Activated CD4-positive, alpha-beta T cell treated with anti-CD3 and anti-CD28 coated beads, Interleukin-2, amount 10 ng/mL, durations not matched to agents 24 days and 14 days (primary cell): ENCODE measurements at regions of chr20 and their contacts with region 1.

Region 1: GRCh38 chr20:41443691-41444090 is 77.1 kb upstream of the EMILIN3 start:
- DNase-seq: no peak
- H3K4me3 Mint-ChIP-seq: peak overlapping the region; percentile 25
- H3K27ac Mint-ChIP-seq: peak overlapping the region; percentile 69
- H3K4me1 Mint-ChIP-seq: peaks cover 33% of the 10 kb centered on the region
- H3K27me3 Mint-ChIP-seq: no peaks in the 10 kb centered on the region

Region 2: GRCh38 chr20:41003143-41003883 is 440.4 kb before region 1 on chr20:
- intact Hi-C with region 1: loop called (anchors 10 kb)
- DNase-seq: peak; percentile 88
- H3K4me3 Mint-ChIP-seq: peak overlapping the region; percentile 72
- H3K27ac Mint-ChIP-seq: peak overlapping the region; percentile 95
- H3K4me1 Mint-ChIP-seq: peaks cover 44% of the 10 kb centered on the region
- H3K27me3 Mint-ChIP-seq: no peaks in the 10 kb centered on the region

Region 3: GRCh38 chr20:41428285-41428684 is 15.4 kb before region 1 on chr20:
- intact Hi-C with region 1: loop called (anchors 1 kb)
- DNase-seq: peak; percentile 85
- H3K4me3 Mint-ChIP-seq: peak overlapping the region; percentile 64
- H3K27ac Mint-ChIP-seq: peak overlapping the region; percentile 91
- H3K4me1 Mint-ChIP-seq: peaks cover 46% of the 10 kb centered on the region
- H3K27me3 Mint-ChIP-seq: no peaks in the 10 kb centered on the region

Region 4: DNA sequence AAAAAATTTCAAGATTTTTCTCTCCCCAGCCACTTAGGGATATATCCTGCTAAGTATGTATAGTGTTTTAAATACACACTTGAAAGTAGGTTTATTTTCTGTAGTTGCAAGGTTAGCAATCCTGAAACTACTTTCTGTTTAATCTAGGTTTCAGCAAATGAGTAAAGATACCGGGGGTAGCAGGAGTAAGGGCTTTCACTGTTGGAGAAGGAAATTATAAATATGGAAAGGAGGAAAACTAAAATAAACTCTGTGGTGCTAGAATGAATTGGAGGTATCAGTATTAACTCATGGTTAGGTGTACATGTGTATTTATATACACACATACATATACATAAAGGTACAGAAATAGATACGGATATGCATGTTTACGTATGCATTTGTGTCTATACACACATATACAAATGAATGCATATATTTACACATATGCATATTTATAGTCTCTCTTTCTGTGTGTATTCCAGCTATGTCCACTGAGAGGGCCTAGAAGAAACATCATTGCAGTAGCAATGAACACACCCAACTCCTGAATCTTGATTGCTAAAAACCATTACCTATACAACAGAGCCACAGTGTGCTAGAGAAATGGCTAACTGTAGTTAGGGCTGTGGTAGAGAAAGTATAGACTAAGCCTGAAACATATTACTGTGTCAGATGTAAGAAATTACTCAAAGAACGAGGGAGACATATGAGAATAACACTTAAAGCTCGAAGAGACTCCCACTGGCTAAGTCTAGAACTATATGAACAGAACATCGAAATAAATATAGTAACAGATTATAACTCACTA is 18.9 kb after region 1 on chr20:
- intact Hi-C with region 1: loop called (anchors 1 kb)
- DNase-seq: no peak
- H3K4me3 Mint-ChIP-seq: no peak overlapping the region
- H3K27ac Mint-ChIP-seq: peak overlapping the region; percentile 7
- H3K4me1 Mint-ChIP-seq: peaks cover 13% of the 10 kb centered on the region
- H3K27me3 Mint-ChIP-seq: no peaks in the 10 kb centered on the region

Region 5: GRCh38 chr20:41526327-41526726 is 82.6 kb after region 1 on chr20:
- intact Hi-C with region 1: no loop called
- DNase-seq: no peak
- H3K4me3 Mint-ChIP-seq: no peak overlapping the region
- H3K27ac Mint-ChIP-seq: no peak overlapping the region
- H3K4me1 Mint-ChIP-seq: peaks cover 4% of the 10 kb centered on the region
- H3K27me3 Mint-ChIP-seq: no peaks in the 10 kb centered on the region